CD14-positive monocyte (primary cell): ENCODE measurements at regions of chr9 and their contacts with region 1.

Region 1: GRCh38 chr9:27573634-27574590 is 631 bp upstream of the C9orf72 start:
- DNase-seq: peak; percentile 100
- H3K4me3 ChIP-seq: peak overlapping the region; percentile 56 to 88 (median 78)
- H3K4me3 Mint-ChIP-seq: peak overlapping the region; percentile 92 to 95
- H3K27ac ChIP-seq: peak overlapping the region; percentile 99 to 100
- H3K27ac Mint-ChIP-seq: peak overlapping the region; percentile 99 to 100 (median 100)
- H3K4me1 ChIP-seq: peaks cover 33 to 44% of the 10 kb centered on the region in 2 donors
- H3K4me1 Mint-ChIP-seq: peaks cover 41% of the 10 kb centered on the region
- H3K27me3 ChIP-seq: no peaks in the 10 kb centered on the region
- H3K27me3 Mint-ChIP-seq: peaks cover 0 to 4% (median 1%) of the 10 kb centered on the region in 3 donors
- CTCF ChIP-seq: no peak

Region 2: DNA sequence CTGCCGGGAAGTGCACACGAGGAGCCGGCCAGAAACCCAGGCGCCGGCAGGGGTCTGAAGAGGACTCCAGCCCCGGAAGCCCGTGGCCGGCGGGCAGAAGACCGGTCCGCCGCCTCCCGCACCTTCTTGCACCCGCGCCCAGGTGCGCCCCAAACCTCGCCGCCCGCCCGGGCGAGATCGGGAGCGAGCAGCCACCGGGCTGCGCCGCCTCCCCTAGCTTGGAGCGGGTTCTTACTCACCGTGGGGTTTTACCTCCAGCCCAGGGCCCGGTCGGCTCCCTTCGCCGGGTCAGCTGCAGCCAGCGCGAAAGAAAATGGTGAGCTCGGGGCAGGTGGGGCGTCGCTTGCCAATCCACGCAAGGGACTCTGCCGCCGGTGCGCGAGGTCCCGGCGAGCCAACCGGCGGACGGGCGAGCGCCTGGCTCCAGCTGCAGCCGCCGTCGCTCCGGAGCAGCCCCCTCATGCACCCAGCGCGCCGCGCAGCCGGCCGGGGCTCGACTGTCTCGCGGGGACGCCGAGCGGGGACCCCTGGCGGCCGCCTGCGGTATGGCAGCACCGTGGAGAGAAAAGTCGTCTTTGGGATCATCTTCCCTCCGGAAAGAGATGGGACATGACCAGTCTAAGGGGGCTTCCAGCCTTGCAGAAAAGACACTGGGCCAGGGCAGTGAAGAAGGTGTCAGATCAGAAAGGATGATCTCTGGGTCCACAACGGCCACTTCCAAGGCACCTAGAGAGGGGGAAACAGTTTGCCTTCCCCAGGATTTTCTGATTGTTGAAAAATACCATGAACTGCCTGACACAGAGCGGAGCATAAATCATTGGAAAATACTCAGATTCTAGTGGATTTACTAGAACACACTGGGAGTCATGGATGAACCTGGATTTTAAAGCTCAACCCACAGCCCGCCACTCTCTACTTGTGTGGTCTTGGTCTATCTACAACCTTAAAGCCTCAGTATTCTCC is 44.3 kb before region 1 on chr9 and contains the start of gene MOB3B:
- intact Hi-C with region 1: loop called in 1 of 2 experiments (anchors 5 kb)
- DNase-seq: peak; percentile 41 to 72 (median 60)
- H3K4me3 ChIP-seq: peak within 1 kb of the TSS; percentile 54 to 88 (median 68)
- H3K4me3 Mint-ChIP-seq: peak within 1 kb of the TSS; percentile 95
- H3K27ac ChIP-seq: peak within 1 kb of the TSS; percentile 50 to 86
- H3K27ac Mint-ChIP-seq: peak within 1 kb of the TSS; percentile 79 to 95 (median 91)
- H3K4me1 ChIP-seq: peaks cover 19 to 23% of the 10 kb centered on the region in 2 donors
- H3K4me1 Mint-ChIP-seq: peaks cover 25% of the 10 kb centered on the region
- H3K27me3 ChIP-seq: peaks cover 0 to 8% of the 10 kb centered on the region in 2 donors
- H3K27me3 Mint-ChIP-seq: peaks cover 8 to 15% (median 13%) of the 10 kb centered on the region in 3 donors
- CTCF ChIP-seq: peak; percentile 98
- polyA plus RNA-seq, gene MOB3B: 1.2 to 2.2 (median 1.4) TPM

Region 3: GRCh38 chr9:27586304-27586703 is 12.4 kb after region 1 on chr9:
- intact Hi-C with region 1: loop called in 1 of 2 experiments (anchors 2 kb)
- DNase-seq: peak in 2 of 3 donors; percentile 56 to 69
- H3K4me3 ChIP-seq: peak overlapping the region; percentile 28 to 75 (median 75)
- H3K4me3 Mint-ChIP-seq: peak overlapping the region; percentile 48 to 71
- H3K27ac ChIP-seq: peak overlapping the region; percentile 2 to 92
- H3K27ac Mint-ChIP-seq: peak overlapping the region; percentile 88 to 96 (median 90)
- H3K4me1 ChIP-seq: peaks cover 67 to 74% of the 10 kb centered on the region in 2 donors
- H3K4me1 Mint-ChIP-seq: peaks cover 69% of the 10 kb centered on the region
- H3K27me3 ChIP-seq: no peaks in the 10 kb centered on the region
- H3K27me3 Mint-ChIP-seq: no peaks in the 10 kb centered on the region
- CTCF ChIP-seq: no peak

Region 4: GRCh38 chr9:27626244-27627187 is 52.6 kb after region 1 on chr9:
- intact Hi-C with region 1: loop called in 1 of 2 experiments (anchors 10 kb)
- DNase-seq: no peak
- H3K4me3 ChIP-seq: no peak overlapping the region
- H3K4me3 Mint-ChIP-seq: no peak overlapping the region
- H3K27ac ChIP-seq: no peak overlapping the region
- H3K27ac Mint-ChIP-seq: no peak overlapping the region
- H3K4me1 ChIP-seq: peaks cover 27 to 35% of the 10 kb centered on the region in 2 donors
- H3K4me1 Mint-ChIP-seq: peaks cover 31% of the 10 kb centered on the region
- H3K27me3 ChIP-seq: no peaks in the 10 kb centered on the region
- H3K27me3 Mint-ChIP-seq: no peaks in the 10 kb centered on the region
- CTCF ChIP-seq: no peak

Region 5: GRCh38 chr9:27701587-27701986 is 127.7 kb after region 1 on chr9:
- intact Hi-C with region 1: loop called (anchors 5 to 10 kb)
- DNase-seq: peak; percentile 62 to 79 (median 78)
- H3K4me3 ChIP-seq: peak overlapping the region; percentile 10 to 65 (median 49)
- H3K4me3 Mint-ChIP-seq: peak overlapping the region; percentile 61 to 67
- H3K27ac ChIP-seq: peak overlapping the region in 1 of 2 donors; percentile 86
- H3K27ac Mint-ChIP-seq: peak overlapping the region; percentile 90 to 99 (median 95)
- H3K4me1 ChIP-seq: peaks cover 30 to 41% of the 10 kb centered on the region in 2 donors
- H3K4me1 Mint-ChIP-seq: peaks cover 40% of the 10 kb centered on the region
- H3K27me3 ChIP-seq: no peaks in the 10 kb centered on the region
- H3K27me3 Mint-ChIP-seq: peaks cover 0 to 4% (median 0%) of the 10 kb centered on the region in 3 donors
- CTCF ChIP-seq: no peak